ENCODE measurements at regions of chr7 and their contacts with region 1.

Region 1: DNA sequence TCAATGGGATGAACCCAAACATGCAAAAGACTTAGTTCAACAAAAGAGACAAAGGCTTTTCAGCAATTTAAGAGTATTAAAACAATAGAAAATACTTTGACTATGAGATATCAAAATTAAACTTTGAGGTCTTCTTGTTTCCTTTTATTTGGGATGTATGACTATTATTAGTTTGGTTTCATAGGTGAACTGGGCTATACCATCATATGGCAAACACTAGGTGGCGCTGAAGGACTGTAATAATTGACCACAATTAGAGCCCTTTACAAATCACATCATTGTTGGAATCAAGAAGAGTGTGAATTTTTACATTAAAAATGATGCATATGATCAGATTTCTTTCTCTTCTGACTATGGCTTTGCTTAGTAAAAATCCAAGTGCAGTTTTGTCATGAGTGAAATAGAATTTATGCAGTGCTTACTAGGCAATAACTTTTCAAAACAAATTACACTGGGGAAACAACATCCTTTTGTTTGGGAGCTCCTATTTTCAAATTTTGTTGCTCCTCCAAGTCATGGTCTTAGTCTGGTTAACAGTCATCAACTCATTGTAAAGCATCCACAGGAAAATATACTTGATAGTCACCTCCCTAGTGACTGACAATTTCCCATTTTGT is 14.7 kb upstream of the NXPH1 start:
- DNase-seq: peak; percentile 67
- ATAC-seq: no peak
- H3K4me3 Mint-ChIP-seq: no peak overlapping the region
- H3K27ac Mint-ChIP-seq: no peak overlapping the region
- H3K4me1 Mint-ChIP-seq: no peaks in the 10 kb centered on the region
- H3K27me3 Mint-ChIP-seq: peaks cover 4% of the 10 kb centered on the region
- CTCF ChIP-seq: peak; percentile 73

Region 2: GRCh38 chr7:7843822-7844371 is 574.8 kb before region 1 on chr7:
- CTCF ChIA-PET with region 1: no interaction called
- POLR2A ChIA-PET with region 1: no interaction called
- intact Hi-C with region 1: no loop called
- DNase-seq: no peak
- ATAC-seq: no peak
- H3K4me3 Mint-ChIP-seq: no peak overlapping the region
- H3K27ac Mint-ChIP-seq: no peak overlapping the region
- H3K4me1 Mint-ChIP-seq: peaks cover 12% of the 10 kb centered on the region
- H3K27me3 Mint-ChIP-seq: no peaks in the 10 kb centered on the region
- CTCF ChIP-seq: no peak

Region 3: GRCh38 chr7:8436965-8437364 is 18.2 kb after region 1 on chr7:
- CTCF ChIA-PET with region 1: interaction called, 11 read pairs
- POLR2A ChIA-PET with region 1: no interaction called
- intact Hi-C with region 1: no loop called
- DNase-seq: peak; percentile 75
- ATAC-seq: peak; percentile 65
- H3K4me3 Mint-ChIP-seq: no peak overlapping the region
- H3K27ac Mint-ChIP-seq: no peak overlapping the region
- H3K4me1 Mint-ChIP-seq: peaks cover 20% of the 10 kb centered on the region
- H3K27me3 Mint-ChIP-seq: peaks cover 81% of the 10 kb centered on the region
- CTCF ChIP-seq: peak; percentile 78

Region 4: GRCh38 chr7:8724080-8724718 is 305.5 kb after region 1 on chr7:
- CTCF ChIA-PET with region 1: interaction called, 10 read pairs
- POLR2A ChIA-PET with region 1: no interaction called
- intact Hi-C with region 1: loop called (anchors 5 kb)
- DNase-seq: peak; percentile 53
- ATAC-seq: no peak
- H3K4me3 Mint-ChIP-seq: no peak overlapping the region
- H3K27ac Mint-ChIP-seq: no peak overlapping the region
- H3K4me1 Mint-ChIP-seq: no peaks in the 10 kb centered on the region
- H3K27me3 Mint-ChIP-seq: no peaks in the 10 kb centered on the region
- CTCF ChIP-seq: peak; percentile 61